Right cardiac atrium (tissue), 5 donors: ENCODE measurements at regions of chr9 and their contacts with region 1.

Region 1: GRCh38 chr9:6428940-6429889 is 16.2 kb downstream of the UHRF2 start:
- DNase-seq: no peak
- ATAC-seq: no peak
- H3K4me3 ChIP-seq: no peak overlapping the region
- H3K27ac ChIP-seq: no peak overlapping the region
- H3K4me1 ChIP-seq: peaks cover 2% of the 10 kb centered on the region
- H3K27me3 ChIP-seq: no peaks in the 10 kb centered on the region

Region 2: GRCh38 chr9:6488395-6488794 is 59.2 kb after region 1 on chr9:
- intact Hi-C with region 1: loop called in 1 of 4 experiments (anchors 10 kb)
- DNase-seq: no peak
- ATAC-seq: no peak
- H3K4me3 ChIP-seq: no peak overlapping the region
- H3K27ac ChIP-seq: no peak overlapping the region
- H3K4me1 ChIP-seq: no peaks in the 10 kb centered on the region
- H3K27me3 ChIP-seq: no peaks in the 10 kb centered on the region